ENCODE measurements at regions of chr19 and their contacts with region 1.

Region 1: GRCh38 chr19:48993175-48994034 is at the starts of genes GYS1 and RUVBL2:
- DNase-seq: peak; percentile 100
- ATAC-seq: peak; percentile 95
- H3K4me3 Mint-ChIP-seq: peak within 1 kb of the TSS; percentile 100
- H3K27ac Mint-ChIP-seq: peak within 1 kb of the TSS; percentile 97
- H3K4me1 Mint-ChIP-seq: peaks cover 41% of the 10 kb centered on the region
- H3K27me3 Mint-ChIP-seq: no peaks in the 10 kb centered on the region
- total RNA-seq, gene GYS1: 80.2 to 102 TPM
- total RNA-seq, gene RUVBL2: 155 to 178 TPM

Region 2: GRCh38 chr19:48290771-48291488 is 702.5 kb before region 1 on chr19:
- CTCF ChIA-PET with region 1: no interaction called
- POLR2A ChIA-PET with region 1: no interaction called
- intact Hi-C with region 1: no loop called
- DNase-seq: peak; percentile 74
- ATAC-seq: peak; percentile 53
- H3K4me3 Mint-ChIP-seq: peak overlapping the region; percentile 64
- H3K27ac Mint-ChIP-seq: no peak overlapping the region
- H3K4me1 Mint-ChIP-seq: peaks cover 3% of the 10 kb centered on the region
- H3K27me3 Mint-ChIP-seq: peaks cover under 1% of the 10 kb centered on the region

Region 3: GRCh38 chr19:48618916-48619691 is 374.3 kb before region 1 on chr19 and contains the starts of genes RPL18 and SPHK2:
- CTCF ChIA-PET with region 1: interaction called, 4 read pairs
- POLR2A ChIA-PET with region 1: no interaction called
- intact Hi-C with region 1: loop called in 1 of 2 experiments (anchors 1 kb)
- DNase-seq: peak; percentile 97
- ATAC-seq: peak; percentile 82
- H3K4me3 Mint-ChIP-seq: peak within 1 kb of the TSS; percentile 94
- H3K27ac Mint-ChIP-seq: peak within 1 kb of the TSS; percentile 97
- H3K4me1 Mint-ChIP-seq: peaks cover 48% of the 10 kb centered on the region
- H3K27me3 Mint-ChIP-seq: no peaks in the 10 kb centered on the region
- total RNA-seq, gene RPL18: 2,026 to 2,191 TPM
- total RNA-seq, gene SPHK2: 27.0 TPM

Region 4: DNA sequence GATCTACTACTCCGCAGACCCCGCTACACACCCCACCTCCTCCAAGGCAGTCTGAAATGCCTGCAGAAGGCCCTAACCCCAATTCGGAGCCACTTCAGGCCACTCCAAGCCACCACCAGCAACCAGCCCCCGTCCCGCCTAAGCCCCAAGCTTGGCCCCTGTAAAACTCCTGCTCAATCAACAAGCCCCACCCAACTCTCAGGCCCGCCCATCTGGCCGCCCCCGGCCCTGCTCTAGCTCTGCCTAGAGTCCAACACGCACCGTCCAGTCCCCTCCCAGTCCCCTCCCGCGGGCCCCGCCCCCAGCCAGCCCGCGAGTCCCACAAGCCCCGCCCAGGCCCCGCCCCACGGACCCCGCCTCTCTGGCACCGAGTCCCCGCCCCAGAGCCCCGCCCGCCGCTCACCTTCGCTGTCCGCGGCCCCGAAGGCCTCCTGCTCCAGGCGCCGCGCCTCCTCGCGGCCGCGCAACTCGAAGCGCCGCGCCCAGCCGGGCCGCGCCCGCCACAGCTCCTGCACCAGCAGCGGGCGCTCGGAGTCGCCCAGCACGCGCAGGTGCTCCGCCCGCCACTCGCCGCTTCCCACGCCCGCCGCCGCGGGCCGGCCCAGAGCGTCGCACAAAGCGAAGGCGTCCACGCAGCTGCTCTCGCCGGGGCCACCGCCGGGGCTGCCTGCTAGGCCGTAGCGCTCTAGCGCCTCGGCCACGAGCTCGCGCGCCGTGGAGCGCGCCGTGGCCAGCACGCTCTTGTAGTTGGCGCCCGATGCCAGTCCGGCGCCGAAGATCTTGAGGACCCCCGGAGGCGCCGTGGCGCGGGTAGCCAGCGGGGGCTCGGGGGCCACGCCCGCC is 254.6 kb before region 1 on chr19:
- CTCF ChIA-PET with region 1: interaction called, 4 read pairs
- POLR2A ChIA-PET with region 1: no interaction called
- intact Hi-C with region 1: loop called in 1 of 2 experiments (anchors 1 kb)
- DNase-seq: peak; percentile 99
- ATAC-seq: peak; percentile 96
- H3K4me3 Mint-ChIP-seq: peak overlapping the region; percentile 51
- H3K27ac Mint-ChIP-seq: peak overlapping the region; percentile 51
- H3K4me1 Mint-ChIP-seq: peaks cover 17% of the 10 kb centered on the region
- H3K27me3 Mint-ChIP-seq: peaks cover 3% of the 10 kb centered on the region

Region 5: DNA sequence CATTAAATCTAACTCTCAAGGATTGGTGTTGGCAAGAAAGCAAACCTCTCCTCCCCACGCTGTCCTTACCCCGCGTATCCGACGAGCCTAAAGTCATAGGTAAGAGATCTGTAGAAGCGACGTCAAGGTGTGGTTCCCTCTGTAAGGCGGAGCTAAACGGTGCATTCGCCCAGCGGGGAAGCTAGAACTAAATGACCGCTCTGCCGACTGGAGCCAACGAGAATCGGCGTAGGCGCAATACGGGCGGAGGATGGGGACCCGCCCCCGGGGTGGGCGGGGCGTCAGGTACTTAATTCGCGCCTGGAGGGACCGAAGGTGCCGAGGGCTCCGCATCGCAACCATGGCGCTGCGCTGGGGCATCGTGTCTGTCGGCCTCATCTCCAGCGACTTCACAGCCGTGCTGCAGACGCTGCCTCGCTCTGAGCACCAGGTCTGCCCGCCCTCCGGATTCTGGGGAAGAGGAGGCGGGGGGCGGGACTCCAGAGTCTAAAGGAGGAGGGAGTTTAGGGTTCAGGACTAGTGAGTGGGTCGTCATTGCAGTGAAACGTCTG is 59.9 kb before region 1 on chr19 and contains the start of gene DHDH:
- CTCF ChIA-PET with region 1: interaction called, 8 read pairs
- POLR2A ChIA-PET with region 1: no interaction called
- intact Hi-C with region 1: loop called in 1 of 2 experiments (anchors 1 kb)
- DNase-seq: peak; percentile 90
- ATAC-seq: peak; percentile 92
- H3K4me3 Mint-ChIP-seq: peak within 1 kb of the TSS; percentile 74
- H3K27ac Mint-ChIP-seq: peak within 1 kb of the TSS; percentile 48
- H3K4me1 Mint-ChIP-seq: peaks cover 10% of the 10 kb centered on the region
- H3K27me3 Mint-ChIP-seq: peaks cover 2% of the 10 kb centered on the region
- total RNA-seq, gene DHDH: 1.4 to 2.4 TPM

Region 6: GRCh38 chr19:48982280-48982679 is 11.1 kb before region 1 on chr19:
- CTCF ChIA-PET with region 1: interaction called, 45 read pairs
- POLR2A ChIA-PET with region 1: interaction called, 4 read pairs
- intact Hi-C with region 1: no loop called
- DNase-seq: no peak
- ATAC-seq: no peak
- H3K4me3 Mint-ChIP-seq: no peak overlapping the region
- H3K27ac Mint-ChIP-seq: no peak overlapping the region
- H3K4me1 Mint-ChIP-seq: peaks cover 8% of the 10 kb centered on the region
- H3K27me3 Mint-ChIP-seq: no peaks in the 10 kb centered on the region

Region 7: DNA sequence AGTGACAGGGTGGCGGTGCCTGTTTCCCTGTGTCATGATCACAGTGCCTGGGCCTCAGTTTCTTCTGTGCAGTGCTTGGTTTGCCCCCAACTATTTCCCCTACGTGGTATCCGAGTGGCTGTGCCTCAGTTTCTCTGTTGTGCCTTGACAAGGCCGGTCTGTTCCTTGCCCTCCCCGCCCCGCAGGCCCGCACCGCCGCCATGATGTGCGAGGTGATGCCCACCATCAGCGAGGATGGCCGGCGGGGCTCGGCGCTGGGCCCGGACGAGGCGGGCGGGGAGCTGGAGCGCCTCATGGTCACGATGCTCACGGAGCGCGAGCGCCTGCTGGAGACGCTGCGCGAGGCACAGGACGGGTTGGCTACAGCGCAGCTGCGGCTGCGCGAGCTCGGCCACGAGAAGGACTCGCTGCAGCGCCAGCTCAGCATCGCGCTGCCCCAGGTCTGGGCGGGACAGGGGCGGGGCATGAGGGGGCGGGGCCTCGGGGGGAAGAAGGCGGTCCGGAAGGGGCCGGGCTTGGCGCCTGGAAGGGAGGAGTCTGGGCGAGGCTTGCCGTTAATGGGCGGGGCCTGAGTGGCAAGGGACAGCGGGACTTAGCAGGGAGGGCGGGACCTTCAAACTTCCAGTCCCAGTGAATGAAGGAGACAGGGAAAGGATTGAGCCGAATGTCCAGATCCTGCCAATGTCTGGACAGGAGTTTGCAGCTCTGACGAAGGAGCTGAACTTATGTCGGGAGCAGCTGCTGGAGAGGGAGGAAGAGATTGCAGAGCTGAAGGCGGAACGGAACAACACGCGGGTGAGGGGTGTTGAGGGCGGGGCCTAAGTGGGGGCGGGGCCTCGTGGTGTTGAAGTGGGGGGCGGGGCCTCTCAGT is 134.5 kb after region 1 on chr19:
- CTCF ChIA-PET with region 1: interaction called, 4 read pairs
- POLR2A ChIA-PET with region 1: no interaction called
- intact Hi-C with region 1: loop called in 1 of 2 experiments (anchors 1 kb)
- DNase-seq: peak; percentile 98
- ATAC-seq: peak; percentile 95
- H3K4me3 Mint-ChIP-seq: peak overlapping the region; percentile 76
- H3K27ac Mint-ChIP-seq: peak overlapping the region; percentile 92
- H3K4me1 Mint-ChIP-seq: peaks cover 11% of the 10 kb centered on the region
- H3K27me3 Mint-ChIP-seq: no peaks in the 10 kb centered on the region

Region 8: GRCh38 chr19:49640113-49640898 is 646.9 kb after region 1 on chr19 and contains the start of gene RRAS:
- CTCF ChIA-PET with region 1: no interaction called
- POLR2A ChIA-PET with region 1: no interaction called
- intact Hi-C with region 1: loop called in 1 of 2 experiments (anchors 1 kb)
- DNase-seq: peak; percentile 100
- ATAC-seq: peak; percentile 76
- H3K4me3 Mint-ChIP-seq: peak within 1 kb of the TSS; percentile 100
- H3K27ac Mint-ChIP-seq: peak within 1 kb of the TSS; percentile 100
- H3K4me1 Mint-ChIP-seq: peaks cover 48% of the 10 kb centered on the region
- H3K27me3 Mint-ChIP-seq: no peaks in the 10 kb centered on the region
- total RNA-seq, gene RRAS: 9.7 to 11.7 TPM